ENCODE measurements at regions of chr5 and their contacts with region 1.

Region 1: DNA sequence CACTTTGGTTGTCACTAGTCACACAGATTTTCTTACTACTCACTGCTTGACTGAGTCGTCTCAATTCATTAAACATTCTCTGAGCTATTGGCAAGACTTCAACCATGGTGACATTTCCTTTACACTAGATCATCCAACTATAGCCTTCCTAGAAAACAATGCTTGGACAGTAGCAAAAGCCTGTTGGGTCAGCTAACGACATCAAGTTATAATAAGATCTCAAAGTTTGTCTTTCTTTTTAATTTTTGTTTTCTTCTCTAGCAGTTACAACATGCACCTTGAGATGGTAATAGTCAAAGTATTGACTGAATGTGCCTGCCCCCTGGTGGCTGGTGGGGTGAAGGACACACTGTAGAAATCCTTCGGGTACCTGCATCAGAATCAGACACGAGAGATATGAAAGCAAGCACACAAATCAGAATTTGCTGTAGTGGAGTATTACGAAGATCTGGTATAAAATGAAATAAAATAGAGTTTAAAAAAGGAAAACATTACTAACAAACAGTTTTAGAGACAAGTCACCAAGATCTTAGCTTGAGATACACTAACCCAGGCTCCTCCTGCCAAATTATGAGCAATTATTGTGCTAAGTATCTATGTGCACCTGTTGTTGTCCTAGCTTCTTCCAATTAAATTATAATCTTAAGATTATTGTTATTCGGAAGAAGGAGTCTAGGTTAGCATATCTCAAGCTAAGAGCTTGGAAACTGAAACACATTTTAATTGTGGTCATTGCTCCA is 81.2 kb downstream of the ARL15 start:
- DNase-seq: peak; percentile 21 to 43
- ATAC-seq: peak in 1 of 2 donors; percentile 68
- H3K4me3 ChIP-seq: no peak overlapping the region
- H3K27ac ChIP-seq: no peak overlapping the region
- H3K4me1 ChIP-seq: peaks cover 0 to 7% of the 10 kb centered on the region in 2 donors
- H3K27me3 ChIP-seq: no peaks in the 10 kb centered on the region
- CTCF ChIP-seq: peak; percentile 44 to 90 (median 72)
- POLR2A ChIP-seq: no peak

Region 2: DNA sequence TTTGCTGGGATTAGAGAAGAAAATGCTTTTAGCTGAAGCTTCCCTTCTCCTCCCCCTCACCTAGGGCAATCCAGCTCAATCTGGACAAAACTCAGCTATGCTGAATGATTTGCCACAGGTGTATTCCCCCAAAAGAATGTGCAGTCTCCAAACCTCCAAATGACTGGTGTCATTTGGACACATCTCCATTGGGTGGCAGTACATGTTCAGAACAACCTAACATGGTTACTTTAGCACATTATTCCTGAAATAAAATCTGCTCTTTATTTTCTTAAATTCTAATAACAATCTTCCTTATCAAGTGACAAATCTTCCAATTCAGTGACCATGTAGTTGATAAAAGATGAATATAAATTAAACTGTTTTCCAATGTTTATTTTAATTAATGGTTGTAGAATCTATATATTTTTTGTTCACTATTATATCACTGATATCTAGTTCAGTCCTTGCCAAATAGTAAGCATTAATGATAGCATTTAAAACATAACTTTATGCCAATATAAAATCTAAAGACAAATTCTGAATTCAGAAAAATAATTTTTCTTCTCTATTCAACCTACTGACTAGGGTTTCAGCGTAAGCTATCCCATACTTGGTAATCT is 1058.4 kb before region 1 on chr5:
- in situ Hi-C with region 1: loop called (anchors 10 to 25 kb)
- intact Hi-C with region 1: no loop called
- DNase-seq: no peak
- ATAC-seq: no peak
- H3K4me3 ChIP-seq: no peak overlapping the region
- H3K27ac ChIP-seq: no peak overlapping the region
- H3K4me1 ChIP-seq: peaks cover 0 to 27% of the 10 kb centered on the region in 2 donors
- H3K27me3 ChIP-seq: no peaks in the 10 kb centered on the region
- CTCF ChIP-seq: peak in 3 of 5 experiments; percentile 30 to 45 (median 44)
- POLR2A ChIP-seq: no peak

Region 3: DNA sequence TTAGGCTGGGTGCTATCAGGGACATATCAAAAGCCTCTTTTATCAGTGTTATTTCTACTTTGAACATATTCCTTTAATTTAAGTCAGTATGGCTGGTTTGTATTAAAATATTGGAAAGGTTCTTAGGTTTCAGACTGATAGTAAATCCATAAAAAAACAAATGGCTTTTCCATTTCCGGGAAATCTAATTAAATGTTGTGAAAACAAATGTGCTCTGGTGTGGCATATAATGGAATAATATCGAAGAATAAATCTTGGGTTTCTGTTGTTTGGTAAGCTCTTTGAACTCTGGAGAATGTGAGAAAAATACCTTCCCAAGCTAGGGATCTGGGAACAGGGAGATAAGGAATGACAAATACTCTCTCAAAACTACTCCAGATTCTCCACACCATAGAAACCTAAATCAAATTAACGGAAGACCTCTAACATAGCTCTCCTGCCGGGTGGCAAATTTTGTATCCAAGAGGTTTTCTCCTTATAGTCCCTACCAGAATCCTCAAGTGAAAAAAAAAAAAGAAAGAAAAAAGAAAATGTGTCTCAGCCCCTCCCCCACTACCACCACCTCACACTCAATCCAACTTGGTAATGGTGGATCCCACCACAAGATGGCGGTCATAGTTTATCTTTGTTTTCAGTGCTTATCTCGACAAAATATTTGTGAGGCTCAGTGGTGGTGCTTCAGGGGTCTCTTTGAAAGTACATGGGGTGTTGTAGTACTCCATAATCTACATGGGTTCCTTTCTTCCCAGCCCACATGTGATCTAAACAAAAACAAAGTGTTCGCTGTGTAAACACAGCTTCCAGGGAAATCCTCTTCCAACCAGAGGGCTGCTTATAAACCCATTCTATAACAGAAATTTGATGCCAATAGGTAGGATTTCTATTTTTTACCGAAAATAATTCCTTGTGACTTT is 803.4 kb before region 1 on chr5:
- in situ Hi-C with region 1: no loop called
- intact Hi-C with region 1: loop called (anchors 5 kb)
- DNase-seq: no peak
- ATAC-seq: no peak
- H3K4me3 ChIP-seq: no peak overlapping the region
- H3K27ac ChIP-seq: no peak overlapping the region
- H3K4me1 ChIP-seq: no peaks in the 10 kb centered on the region
- H3K27me3 ChIP-seq: no peaks in the 10 kb centered on the region
- CTCF ChIP-seq: peak in 1 of 5 experiments; percentile 24
- POLR2A ChIP-seq: no peak

Region 4: GRCh38 chr5:53481887-53482716 is 747.1 kb before region 1 on chr5:
- in situ Hi-C with region 1: loop called in 2 of 4 experiments (anchors 10 kb)
- intact Hi-C with region 1: loop called (anchors 5 kb)
- DNase-seq: peak in 1 of 2 donors; percentile 72
- ATAC-seq: peak; percentile 40 to 67
- H3K4me3 ChIP-seq: peak overlapping the region; percentile 69 to 71 (median 70)
- H3K27ac ChIP-seq: peak overlapping the region; percentile 32 to 70 (median 52)
- H3K4me1 ChIP-seq: peaks cover 13 to 21% of the 10 kb centered on the region in 2 donors
- H3K27me3 ChIP-seq: no peaks in the 10 kb centered on the region
- CTCF ChIP-seq: peak in 4 of 5 experiments; percentile 21 to 48 (median 34)
- POLR2A ChIP-seq: no peak

Region 5: GRCh38 chr5:54040804-54041203 is 188.4 kb before region 1 on chr5:
- in situ Hi-C with region 1: no loop called
- intact Hi-C with region 1: no loop called
- DNase-seq: no peak
- ATAC-seq: no peak
- H3K4me3 ChIP-seq: no peak overlapping the region
- H3K27ac ChIP-seq: no peak overlapping the region
- H3K4me1 ChIP-seq: no peaks in the 10 kb centered on the region
- H3K27me3 ChIP-seq: no peaks in the 10 kb centered on the region
- CTCF ChIP-seq: no peak
- POLR2A ChIP-seq: no peak

Region 6: GRCh38 chr5:54867310-54867944 is 638.2 kb after region 1 on chr5:
- in situ Hi-C with region 1: loop called in 1 of 4 experiments (anchors 25 kb)
- intact Hi-C with region 1: no loop called
- DNase-seq: no peak
- ATAC-seq: peak; percentile 61 to 62
- H3K4me3 ChIP-seq: peak overlapping the region in 3 of 4 donors; percentile 23 to 37 (median 33)
- H3K27ac ChIP-seq: no peak overlapping the region
- H3K4me1 ChIP-seq: no peaks in the 10 kb centered on the region
- H3K27me3 ChIP-seq: no peaks in the 10 kb centered on the region
- CTCF ChIP-seq: peak; percentile 32 to 69 (median 55)
- POLR2A ChIP-seq: no peak

Measured in gastrocnemius medialis (tissue), 4 donors.